ENCODE measurements at regions of chr16 and their contacts with region 1.

Region 1: GRCh38 chr16:70470927-70471341 is 16.5 kb downstream of the FCSK start:
- DNase-seq: no peak
- ATAC-seq: peak; percentile 40 to 58

Region 2: DNA sequence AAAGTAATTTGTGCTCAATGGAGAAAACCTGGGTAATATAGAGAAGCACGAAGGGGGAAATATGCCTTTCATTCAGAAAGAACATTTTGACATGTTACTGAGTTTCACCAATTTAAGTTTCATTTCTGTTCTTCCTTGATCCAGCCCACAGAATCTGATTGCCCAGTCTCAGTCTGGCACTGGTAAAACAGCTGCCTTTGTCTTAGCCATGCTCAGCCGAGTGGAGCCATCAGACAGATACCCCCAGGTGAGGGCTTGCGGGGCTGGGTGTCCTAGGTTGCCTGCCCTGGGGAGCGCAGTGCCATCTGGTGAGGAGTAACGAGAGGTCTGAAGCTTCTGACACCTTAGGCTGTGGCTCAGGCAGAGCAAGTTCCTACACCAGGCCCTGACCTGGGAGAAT is 106.5 kb before region 1 on chr16:
- intact Hi-C with region 1: loop called in 1 of 2 experiments (anchors 5 kb)
- DNase-seq: no peak
- ATAC-seq: no peak

Region 3: GRCh38 chr16:70372921-70373728 is 97.8 kb before region 1 on chr16:
- intact Hi-C with region 1: loop called (anchors 5 kb)
- DNase-seq: no peak
- ATAC-seq: no peak

Measured in left cardiac atrium (tissue), 4 donors.